Activated T-helper 2 cell treated with anti-CD3 and anti-CD28 coated beads, Interferon-gamma antibody, Interleukin-2, Interleukin-4, amounts not matched to agents 10 μg/mL and 5 μg/mL and 100 μg/mL, durations not matched to agents 14 hours and 24 hours and 36 hours (primary cell): ENCODE measurements at regions of chr16 and their contacts with region 1.

Region 1: GRCh38 chr16:527006-527753 is at the start of gene CAPN15:
- DNase-seq: peak; percentile 82
- H3K4me3 Mint-ChIP-seq: peak within 1 kb of the TSS; percentile 95
- H3K27ac Mint-ChIP-seq: peak within 1 kb of the TSS; percentile 99
- H3K4me1 Mint-ChIP-seq: peaks cover 21% of the 10 kb centered on the region
- H3K27me3 Mint-ChIP-seq: no peaks in the 10 kb centered on the region
- total RNA-seq, gene CAPN15: 101 and 103 TPM in 2 replicates

Region 2: GRCh38 chr16:391885-392335 is 135.3 kb before region 1 on chr16:
- intact Hi-C with region 1: loop called (anchors 10 kb)
- DNase-seq: peak; percentile 56
- H3K4me3 Mint-ChIP-seq: no peak overlapping the region
- H3K27ac Mint-ChIP-seq: no peak overlapping the region
- H3K4me1 Mint-ChIP-seq: peaks cover 4% of the 10 kb centered on the region
- H3K27me3 Mint-ChIP-seq: peaks cover 8% of the 10 kb centered on the region

Region 3: DNA sequence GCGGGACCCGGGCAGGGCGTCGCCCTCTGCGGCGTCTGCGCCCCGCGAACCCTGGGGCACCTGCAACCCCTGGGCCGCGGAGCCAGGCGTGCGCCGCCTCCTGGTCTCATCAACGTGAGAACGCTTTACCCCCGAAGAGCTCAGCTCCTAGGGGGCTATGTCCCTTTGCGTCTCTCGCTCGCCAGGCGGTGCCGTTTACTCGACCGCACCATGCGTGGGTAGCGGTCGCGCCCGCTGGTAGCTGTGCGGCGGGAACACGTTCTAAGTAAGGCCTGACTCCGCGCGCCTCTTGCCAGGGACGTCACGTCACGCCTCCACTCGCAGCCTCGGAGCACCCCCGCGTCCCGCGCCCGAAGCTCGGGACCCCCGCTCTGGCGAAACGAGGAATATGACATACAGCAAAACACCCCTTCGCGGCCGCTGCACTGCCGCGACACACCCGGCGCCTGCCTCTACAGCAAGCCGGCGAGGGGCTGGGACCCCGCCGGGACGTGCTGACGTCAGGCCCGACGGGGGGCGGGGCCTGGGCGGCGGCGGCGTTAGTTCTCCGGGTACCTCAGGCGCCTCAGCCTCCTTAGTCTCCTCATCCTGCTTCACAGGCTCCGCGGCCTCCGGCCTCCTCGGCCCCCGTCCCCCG is 102.0 kb before region 1 on chr16 and contains the start of gene RAB11FIP3:
- intact Hi-C with region 1: loop called (anchors 5 kb)
- DNase-seq: peak; percentile 81
- H3K4me3 Mint-ChIP-seq: peak within 1 kb of the TSS; percentile 81
- H3K27ac Mint-ChIP-seq: peak within 1 kb of the TSS; percentile 70
- H3K4me1 Mint-ChIP-seq: peaks cover 30% of the 10 kb centered on the region
- H3K27me3 Mint-ChIP-seq: peaks cover 12% of the 10 kb centered on the region
- total RNA-seq, gene RAB11FIP3: 45.7 and 47.2 TPM in 2 replicates

Region 4: GRCh38 chr16:569445-570254 is 42.5 kb after region 1 on chr16 and contains the start of gene PIGQ:
- intact Hi-C with region 1: loop called (anchors 5 kb)
- DNase-seq: peak; percentile 61
- H3K4me3 Mint-ChIP-seq: peak within 1 kb of the TSS; percentile 88
- H3K27ac Mint-ChIP-seq: peak within 1 kb of the TSS; percentile 89
- H3K4me1 Mint-ChIP-seq: peaks cover 24% of the 10 kb centered on the region
- H3K27me3 Mint-ChIP-seq: no peaks in the 10 kb centered on the region
- total RNA-seq, gene PIGQ: 43.4 and 44.9 TPM in 2 replicates

Region 5: GRCh38 chr16:589658-590159 is 62.5 kb after region 1 on chr16 and contains the start of gene RAB40C:
- intact Hi-C with region 1: loop called (anchors 1 kb)
- DNase-seq: peak; percentile 98
- H3K4me3 Mint-ChIP-seq: peak within 1 kb of the TSS; percentile 97
- H3K27ac Mint-ChIP-seq: peak within 1 kb of the TSS; percentile 98
- H3K4me1 Mint-ChIP-seq: peaks cover 16% of the 10 kb centered on the region
- H3K27me3 Mint-ChIP-seq: no peaks in the 10 kb centered on the region
- total RNA-seq, gene RAB40C: 13.4 and 16.2 TPM in 2 replicates

Region 6: DNA sequence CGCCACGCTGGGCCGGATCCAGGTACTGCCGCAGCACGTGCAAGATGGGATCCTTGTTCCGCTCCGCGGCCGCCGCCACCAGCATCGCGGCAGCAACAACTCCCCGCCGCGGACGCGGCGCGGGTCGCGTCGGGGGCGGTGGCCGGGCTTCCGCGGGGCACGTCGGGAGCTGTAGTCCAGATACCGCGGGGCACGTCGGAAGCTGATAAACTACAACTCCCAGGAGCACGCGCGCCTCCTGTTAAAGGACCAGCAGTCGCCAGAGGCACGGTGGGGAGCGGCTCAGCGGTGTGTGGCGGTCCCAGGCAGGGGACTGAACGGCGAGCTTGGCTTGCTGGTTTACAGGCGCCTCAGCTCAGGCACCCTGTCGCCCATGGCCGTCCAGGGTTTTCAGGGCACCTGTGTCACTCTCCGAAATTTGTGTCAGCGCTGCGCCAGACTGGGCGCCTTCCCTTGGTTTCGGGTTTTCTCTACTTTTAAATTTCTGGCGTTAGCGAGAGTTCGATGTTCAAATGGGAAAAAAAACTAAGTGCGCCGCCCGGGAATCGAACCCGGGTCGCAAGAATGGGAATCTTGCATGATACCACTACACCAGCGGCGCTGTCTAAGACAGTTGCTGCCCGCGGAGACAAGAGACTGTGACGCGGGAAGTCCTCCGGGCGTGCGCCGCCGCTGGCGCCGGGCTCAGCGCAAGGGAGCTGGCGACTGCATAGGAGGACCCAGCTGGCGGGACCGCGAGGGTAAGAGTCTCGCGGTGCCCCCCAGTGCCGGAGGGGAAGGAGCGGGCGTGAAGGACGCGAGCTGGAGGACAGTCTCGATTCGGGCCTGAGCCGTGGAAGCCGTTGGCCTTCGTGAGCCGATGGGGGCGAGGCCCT is 109.3 kb after region 1 on chr16 and contains the start of gene METTL26:
- intact Hi-C with region 1: loop called (anchors 5 kb)
- DNase-seq: peak; percentile 91
- H3K4me3 Mint-ChIP-seq: peak within 1 kb of the TSS; percentile 90
- H3K27ac Mint-ChIP-seq: peak within 1 kb of the TSS; percentile 89
- H3K4me1 Mint-ChIP-seq: peaks cover 8% of the 10 kb centered on the region
- H3K27me3 Mint-ChIP-seq: no peaks in the 10 kb centered on the region
- total RNA-seq, gene METTL26: 128 and 131 TPM in 2 replicates

Region 7: DNA sequence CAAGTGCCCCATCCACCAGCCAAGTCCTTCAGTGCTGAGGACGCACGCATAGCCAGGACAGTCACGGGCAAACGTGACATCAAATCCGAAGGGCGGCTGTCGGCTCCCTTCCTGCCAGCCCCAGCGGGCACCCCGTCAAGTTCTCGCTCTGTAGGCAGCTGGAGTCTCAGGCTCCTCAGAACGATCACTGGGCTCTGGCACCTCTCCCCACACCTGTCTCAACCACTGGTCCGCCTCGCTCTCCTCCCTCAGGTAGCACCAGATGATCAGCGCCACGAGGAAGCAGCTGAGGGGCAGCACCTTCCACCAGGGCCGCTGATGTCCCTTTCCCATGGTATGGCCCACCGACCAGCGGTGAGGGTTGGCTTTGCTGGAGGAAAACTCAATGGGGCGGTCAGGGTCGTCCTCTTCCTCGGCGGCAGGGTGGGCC is 892.9 kb after region 1 on chr16:
- intact Hi-C with region 1: loop called (anchors 5 kb)
- DNase-seq: peak; percentile 16
- H3K4me3 Mint-ChIP-seq: peak overlapping the region; percentile 87
- H3K27ac Mint-ChIP-seq: peak overlapping the region; percentile 98
- H3K4me1 Mint-ChIP-seq: peaks cover 4% of the 10 kb centered on the region
- H3K27me3 Mint-ChIP-seq: no peaks in the 10 kb centered on the region